K562 (cell line): ENCODE measurements at regions of chr2 and their contacts with region 1.

Region 1: DNA sequence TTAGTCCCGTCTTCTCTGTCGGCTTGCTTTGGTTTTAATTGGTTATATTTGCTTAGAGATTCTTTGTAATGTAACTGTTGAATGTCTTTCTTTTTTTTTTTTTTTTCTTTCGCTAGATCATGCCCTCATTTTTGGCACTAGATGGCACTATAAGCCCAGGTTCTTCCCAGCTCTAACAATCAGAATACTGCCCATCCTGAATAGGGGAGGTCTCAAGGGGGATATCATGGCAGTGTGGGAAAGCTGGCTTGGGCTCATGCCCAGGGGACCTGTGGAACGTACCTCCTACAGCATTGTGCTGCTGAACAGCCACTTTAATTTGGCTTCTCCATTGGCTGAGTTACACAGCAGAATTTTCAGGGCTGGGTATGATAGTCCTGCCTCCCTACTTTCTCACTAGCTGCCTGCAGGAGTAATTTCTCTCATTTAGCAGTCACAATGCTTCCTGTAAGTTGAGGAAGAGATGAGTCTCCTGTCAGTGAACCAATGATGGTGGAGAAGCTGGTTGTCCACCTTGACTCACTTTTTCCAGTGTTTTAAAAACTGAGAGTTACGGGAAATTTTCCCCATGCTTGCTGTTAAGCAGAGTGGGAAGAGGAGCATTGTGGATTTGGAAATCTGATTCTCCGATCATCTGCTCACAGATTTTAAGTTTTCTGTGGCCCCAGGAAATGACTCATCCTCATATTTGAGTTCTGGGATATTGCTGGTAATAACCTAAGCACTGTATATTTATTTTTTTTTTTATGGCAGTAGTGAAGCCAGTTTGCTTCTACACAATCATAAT is 47.2 kb downstream of the RAD51AP2 start:
- DNase-seq: peak; percentile 20 to 40 (median 28)
- ATAC-seq: peak; percentile 83
- H3K4me3 ChIP-seq: no peak overlapping the region
- H3K27ac ChIP-seq: no peak overlapping the region
- H3K4me1 ChIP-seq: no peaks in the 10 kb centered on the region
- H3K27me3 ChIP-seq: no peaks in the 10 kb centered on the region
- CTCF ChIP-seq: peak; percentile 53 to 61 (median 56)
- EP300 ChIP-seq: no peak
- POLR2A ChIP-seq: no peak
- RAD21 ChIP-seq: peak; percentile 46 to 68; a peak in 3 of 4 replicates

Region 2: DNA sequence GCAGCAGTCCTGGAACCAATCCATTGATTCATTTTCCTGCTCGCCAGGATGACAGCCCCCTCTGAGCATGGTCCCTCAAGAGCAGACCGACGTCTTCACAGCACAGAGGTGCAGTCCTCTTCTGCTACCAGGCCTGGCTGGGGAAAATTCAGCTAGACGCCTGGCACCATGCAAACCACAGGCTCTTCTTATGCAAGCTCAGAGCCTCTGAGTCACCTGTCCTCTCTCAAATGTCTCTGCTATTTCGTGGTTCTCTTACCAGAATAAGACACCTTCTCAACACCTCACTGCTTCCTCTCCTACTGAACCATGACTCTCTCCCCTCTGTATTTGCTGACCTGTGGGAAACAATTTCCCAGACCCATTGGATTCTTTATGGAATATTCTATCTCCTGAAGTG is 725.6 kb before region 1 on chr2:
- CTCF ChIA-PET with region 1: no interaction called
- POLR2A ChIA-PET with region 1: no interaction called
- in situ Hi-C with region 1: no loop called
- intact Hi-C with region 1: no loop called
- DNase-seq: no peak
- ATAC-seq: no peak
- H3K4me3 ChIP-seq: no peak overlapping the region
- H3K27ac ChIP-seq: no peak overlapping the region
- H3K4me1 ChIP-seq: peaks cover 13 to 29% of the 10 kb centered on the region in 2 experiments
- H3K27me3 ChIP-seq: no peaks in the 10 kb centered on the region
- CTCF ChIP-seq: no peak
- EP300 ChIP-seq: no peak
- POLR2A ChIP-seq: no peak
- RAD21 ChIP-seq: no peak

Region 3: DNA sequence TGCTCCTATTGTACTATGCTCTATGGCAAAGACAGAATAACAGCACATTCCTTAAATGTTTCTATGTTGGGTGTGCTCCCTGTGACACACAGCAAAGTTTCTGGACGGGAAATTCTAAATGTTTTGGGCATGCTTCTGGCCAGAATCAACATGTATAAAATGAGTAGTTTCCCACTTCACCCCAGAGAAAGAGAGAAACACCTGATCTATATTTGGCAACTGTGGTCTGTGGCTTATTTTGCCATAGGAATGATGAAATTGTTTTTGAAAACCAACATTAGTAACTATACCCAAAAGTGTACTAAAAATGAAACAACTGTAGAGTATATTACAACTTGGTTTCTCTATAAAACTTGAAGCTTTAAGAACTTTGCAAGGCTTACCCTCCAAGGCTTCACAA is 41.9 kb before region 1 on chr2:
- CTCF ChIA-PET with region 1: no interaction called
- POLR2A ChIA-PET with region 1: no interaction called
- in situ Hi-C with region 1: no loop called
- intact Hi-C with region 1: no loop called
- DNase-seq: no peak
- ATAC-seq: no peak
- H3K4me3 ChIP-seq: no peak overlapping the region
- H3K27ac ChIP-seq: no peak overlapping the region
- H3K4me1 ChIP-seq: no peaks in the 10 kb centered on the region
- H3K27me3 ChIP-seq: no peaks in the 10 kb centered on the region
- CTCF ChIP-seq: no peak
- EP300 ChIP-seq: no peak
- POLR2A ChIP-seq: no peak
- RAD21 ChIP-seq: no peak

Region 4: GRCh38 chr2:17573085-17573803 is 102.2 kb after region 1 on chr2:
- CTCF ChIA-PET with region 1: no interaction called
- POLR2A ChIA-PET with region 1: no interaction called
- in situ Hi-C with region 1: no loop called
- intact Hi-C with region 1: loop called (anchors 1 kb)
- DNase-seq: no peak
- ATAC-seq: peak; percentile 54; the same call in 1 of the 3 replicates
- H3K4me3 ChIP-seq: no peak overlapping the region
- H3K27ac ChIP-seq: no peak overlapping the region
- H3K4me1 ChIP-seq: no peaks in the 10 kb centered on the region
- H3K27me3 ChIP-seq: 0 out of 5 replicates have a peak, but pooled peaks cover 0 to 4% of the 10 kb centered on the region in 2 experiments
- CTCF ChIP-seq: peak in 1 of 3 experiments; percentile 14; a peak in 2 of 6 replicates
- EP300 ChIP-seq: no peak
- POLR2A ChIP-seq: no peak
- RAD21 ChIP-seq: peak in 1 of 2 experiments; percentile 67; a peak in 3 of 4 replicates

Region 5: GRCh38 chr2:17672583-17673317 is 201.7 kb after region 1 on chr2:
- CTCF ChIA-PET with region 1: interaction called, 19 read pairs
- POLR2A ChIA-PET with region 1: no interaction called
- in situ Hi-C with region 1: loop called (anchors 10 kb)
- intact Hi-C with region 1: loop called (anchors 1 kb)
- DNase-seq: no peak
- ATAC-seq: peak; percentile 70
- H3K4me3 ChIP-seq: no peak overlapping the region
- H3K27ac ChIP-seq: no peak overlapping the region
- H3K4me1 ChIP-seq: no peaks in the 10 kb centered on the region
- H3K27me3 ChIP-seq: no peaks in the 10 kb centered on the region
- CTCF ChIP-seq: no peak
- EP300 ChIP-seq: no peak
- POLR2A ChIP-seq: no peak
- RAD21 ChIP-seq: no peak

Region 6: DNA sequence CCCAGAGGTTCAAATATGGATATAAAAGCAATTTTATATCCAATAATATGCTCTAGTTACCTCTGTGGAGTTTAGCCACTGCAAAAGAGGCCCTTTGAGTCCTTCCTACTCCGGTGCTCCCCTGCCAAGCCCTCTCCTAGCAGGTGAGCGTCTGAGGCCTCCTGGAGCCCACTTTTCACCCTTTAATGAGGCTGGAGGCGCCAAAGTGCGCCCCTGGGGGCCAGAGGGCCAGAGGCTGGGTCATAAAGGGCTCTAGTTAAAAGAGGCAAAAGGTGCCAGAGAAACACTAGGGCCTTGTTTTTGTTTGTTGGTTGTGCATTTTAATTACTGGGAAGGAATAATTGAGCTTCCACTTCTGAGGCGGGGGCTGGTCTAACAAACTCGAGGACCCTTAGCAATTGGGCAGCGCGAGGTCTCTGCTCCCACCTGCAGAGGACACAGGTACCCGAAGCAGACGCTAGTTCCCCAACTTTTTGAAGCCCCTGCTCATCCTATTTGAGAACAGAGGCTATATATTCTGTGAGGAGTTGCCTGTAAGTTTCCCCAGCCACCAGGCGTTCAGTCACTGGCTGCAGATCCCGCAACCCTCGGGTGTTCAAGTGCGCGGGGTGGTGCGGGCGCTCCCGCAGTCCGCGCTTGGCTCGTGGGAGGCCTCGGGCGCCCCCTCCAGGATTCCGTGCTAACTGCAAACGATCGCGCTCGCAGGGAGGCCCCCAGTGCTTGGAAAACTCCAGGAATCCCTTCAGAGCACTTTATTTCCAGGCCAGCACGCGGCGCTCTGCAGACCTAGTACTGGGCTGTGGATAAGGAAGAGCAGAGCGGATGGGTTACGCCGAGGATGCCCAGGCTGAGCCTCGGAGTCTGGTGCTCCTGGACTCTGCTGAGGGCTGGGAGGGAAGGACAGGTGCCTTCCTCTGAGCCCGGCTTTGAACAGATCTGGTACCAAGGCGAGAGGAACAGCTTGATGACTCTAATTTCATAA is 359.3 kb after region 1 on chr2:
- CTCF ChIA-PET with region 1: no interaction called
- POLR2A ChIA-PET with region 1: no interaction called
- in situ Hi-C with region 1: no loop called
- intact Hi-C with region 1: loop called (anchors 5 kb)
- DNase-seq: peak; percentile 69 to 74 (median 72)
- ATAC-seq: peak; percentile 99
- H3K4me3 ChIP-seq: no peak overlapping the region
- H3K27ac ChIP-seq: no peak overlapping the region
- H3K4me1 ChIP-seq: peaks cover 0 to 6% of the 10 kb centered on the region in 2 experiments; a peak in 2 of 5 replicates
- H3K27me3 ChIP-seq: peaks cover 8 to 11% of the 10 kb centered on the region in 2 experiments; a peak in 3 of 5 replicates
- CTCF ChIP-seq: peak; percentile 89 to 93 (median 89)
- EP300 ChIP-seq: no peak
- POLR2A ChIP-seq: no peak
- RAD21 ChIP-seq: peak; percentile 40 to 70

Region 7: GRCh38 chr2:17901246-17901645 is 430.2 kb after region 1 on chr2:
- CTCF ChIA-PET with region 1: no interaction called
- POLR2A ChIA-PET with region 1: no interaction called
- in situ Hi-C with region 1: no loop called
- intact Hi-C with region 1: no loop called
- DNase-seq: peak in 1 of 4 experiments; percentile 7
- ATAC-seq: no peak
- H3K4me3 ChIP-seq: no peak overlapping the region
- H3K27ac ChIP-seq: no peak overlapping the region
- H3K4me1 ChIP-seq: no peaks in the 10 kb centered on the region
- H3K27me3 ChIP-seq: no peaks in the 10 kb centered on the region; a peak in 1 of 5 replicates
- CTCF ChIP-seq: no peak
- EP300 ChIP-seq: no peak
- POLR2A ChIP-seq: no peak
- RAD21 ChIP-seq: no peak

Region 8: GRCh38 chr2:18178736-18179349 is 707.8 kb after region 1 on chr2:
- CTCF ChIA-PET with region 1: no interaction called
- POLR2A ChIA-PET with region 1: no interaction called
- in situ Hi-C with region 1: no loop called
- intact Hi-C with region 1: loop called (anchors 2 kb)
- DNase-seq: peak; percentile 38 to 59 (median 56)
- ATAC-seq: peak; percentile 83
- H3K4me3 ChIP-seq: no peak overlapping the region
- H3K27ac ChIP-seq: no peak overlapping the region
- H3K4me1 ChIP-seq: no peaks in the 10 kb centered on the region
- H3K27me3 ChIP-seq: no peaks in the 10 kb centered on the region
- CTCF ChIP-seq: peak; percentile 51 to 73 (median 68)
- EP300 ChIP-seq: no peak
- POLR2A ChIP-seq: no peak
- RAD21 ChIP-seq: peak; percentile 68 to 79

Region 9: GRCh38 chr2:18378020-18378653 is 907.1 kb after region 1 on chr2:
- CTCF ChIA-PET with region 1: no interaction called
- POLR2A ChIA-PET with region 1: no interaction called
- in situ Hi-C with region 1: loop called (anchors 25 kb)
- intact Hi-C with region 1: loop called (anchors 2 kb)
- DNase-seq: peak; percentile 42 to 57 (median 53)
- ATAC-seq: peak; percentile 83
- H3K4me3 ChIP-seq: no peak overlapping the region
- H3K27ac ChIP-seq: no peak overlapping the region
- H3K4me1 ChIP-seq: no peaks in the 10 kb centered on the region
- H3K27me3 ChIP-seq: no peaks in the 10 kb centered on the region
- CTCF ChIP-seq: peak; percentile 53 to 69 (median 61); a peak in 5 of 6 replicates
- EP300 ChIP-seq: no peak
- POLR2A ChIP-seq: no peak
- RAD21 ChIP-seq: peak; percentile 57 to 72

Region 10: GRCh38 chr2:18387441-18388206 is 916.6 kb after region 1 on chr2:
- CTCF ChIA-PET with region 1: no interaction called
- POLR2A ChIA-PET with region 1: no interaction called
- in situ Hi-C with region 1: loop called (anchors 25 kb)
- intact Hi-C with region 1: no loop called
- DNase-seq: peak; percentile 52 to 75 (median 71)
- ATAC-seq: peak; percentile 98
- H3K4me3 ChIP-seq: no peak overlapping the region
- H3K27ac ChIP-seq: no peak overlapping the region
- H3K4me1 ChIP-seq: no peaks in the 10 kb centered on the region
- H3K27me3 ChIP-seq: no peaks in the 10 kb centered on the region
- CTCF ChIP-seq: peak; percentile 72 to 87 (median 85)
- EP300 ChIP-seq: no peak
- POLR2A ChIP-seq: no peak
- RAD21 ChIP-seq: peak; percentile 68 to 73